ENCODE measurements at regions of chr1 and their contacts with region 1.

Region 1: DNA sequence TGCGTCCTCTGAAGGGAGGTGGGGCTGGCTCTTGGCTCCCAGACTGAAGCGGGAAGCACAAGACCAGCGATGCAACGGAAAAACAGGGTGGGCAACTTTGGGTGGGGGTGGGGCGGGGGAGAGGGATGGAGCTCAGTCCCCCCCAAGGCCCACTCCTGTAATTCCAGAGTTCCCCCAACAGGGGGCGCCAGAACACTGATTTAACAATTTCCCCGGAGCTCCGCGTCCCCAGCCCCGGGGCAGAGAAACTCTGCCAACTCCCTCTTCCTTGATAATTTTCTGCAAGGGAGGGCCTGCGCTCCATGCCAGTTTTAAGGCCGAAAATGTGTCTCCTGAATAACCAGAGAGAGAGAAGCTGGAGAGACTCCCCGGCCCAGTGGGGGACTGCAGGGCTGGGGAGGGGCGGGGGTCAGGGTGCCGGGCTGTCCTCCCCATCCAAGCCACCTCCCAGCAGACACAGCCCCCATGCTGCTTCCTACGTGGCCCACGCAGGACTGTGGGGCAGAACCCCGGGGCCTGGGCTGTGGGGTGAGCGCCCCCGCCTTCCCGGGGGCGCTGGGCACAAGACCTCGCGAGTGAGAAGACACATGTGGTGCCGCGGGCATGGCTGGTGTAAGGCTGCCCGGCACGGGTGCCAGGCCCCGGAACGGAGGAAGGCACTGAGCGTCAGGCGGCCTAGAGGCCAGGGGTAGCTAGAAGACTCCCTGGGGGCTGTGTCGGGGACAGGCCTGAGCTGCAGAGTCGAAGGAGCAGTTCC is 51.4 kb downstream of the KIF21B start:
- DNase-seq: no peak
- ATAC-seq: no peak
- H3K4me3 ChIP-seq: no peak overlapping the region
- H3K27ac ChIP-seq: no peak overlapping the region
- H3K4me1 ChIP-seq: peaks cover 23% of the 10 kb centered on the region
- H3K27me3 ChIP-seq: no peaks in the 10 kb centered on the region
- CTCF ChIP-seq: peak; percentile 62 to 82 (median 75)
- EP300 ChIP-seq: no peak
- POLR2A ChIP-seq: no peak
- RAD21 ChIP-seq: peak; percentile 88

Region 2: GRCh38 chr1:200628223-200628881 is 343.8 kb before region 1 on chr1:
- CTCF ChIA-PET with region 1: interaction called, 54 read pairs
- POLR2A ChIA-PET with region 1: no interaction called
- RAD21 ChIA-PET with region 1: interaction called, 53 read pairs
- SMC1A ChIA-PET with region 1: interaction called, 27 read pairs
- in situ Hi-C with region 1: loop called (anchors 5 kb)
- intact Hi-C with region 1: loop called (anchors 5 kb)
- DNase-seq: peak; percentile 89
- ATAC-seq: peak; percentile 82
- H3K4me3 ChIP-seq: peak overlapping the region; percentile 61
- H3K27ac ChIP-seq: peak overlapping the region; percentile 96
- H3K4me1 ChIP-seq: peaks cover 37% of the 10 kb centered on the region
- H3K27me3 ChIP-seq: no peaks in the 10 kb centered on the region
- CTCF ChIP-seq: no peak
- EP300 ChIP-seq: peak; percentile 54 to 55; a peak in 2 of 4 replicates
- POLR2A ChIP-seq: no peak
- RAD21 ChIP-seq: no peak

Region 3: DNA sequence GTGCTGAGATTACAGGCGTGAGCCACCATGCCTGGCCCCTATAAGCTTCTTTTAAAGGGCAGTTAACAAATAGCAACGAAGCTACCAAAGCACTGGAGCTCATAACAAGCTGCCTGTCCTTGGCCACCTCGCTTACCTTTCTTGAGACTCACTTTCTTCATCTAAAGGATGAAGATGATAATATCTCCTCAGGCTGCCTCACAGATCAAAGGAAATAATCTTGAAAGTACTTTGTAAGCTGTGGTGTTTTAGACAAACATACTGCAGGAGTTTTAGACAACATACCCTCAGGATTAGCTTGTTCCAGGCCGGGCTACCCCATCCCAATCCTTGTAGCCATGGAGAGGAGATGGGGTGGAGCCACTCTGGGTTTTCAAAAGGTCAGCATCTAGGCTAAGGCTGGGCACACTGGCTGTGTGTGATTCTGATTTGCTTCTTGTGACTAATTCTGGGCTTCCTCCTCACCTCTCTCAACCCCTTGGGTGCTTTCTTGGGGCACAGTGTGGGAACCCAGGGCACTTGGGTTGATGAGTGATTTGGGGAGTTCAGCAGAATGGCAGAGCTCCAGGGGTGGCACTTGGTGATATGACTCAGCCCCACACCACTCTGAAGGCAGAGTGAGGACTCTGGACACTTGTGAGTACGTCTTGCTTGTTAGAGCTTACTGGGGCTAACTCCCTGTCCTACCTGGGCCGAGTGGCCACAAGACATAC is 94.1 kb before region 1 on chr1:
- CTCF ChIA-PET with region 1: interaction called, 11 read pairs
- POLR2A ChIA-PET with region 1: interaction called, 5 read pairs
- RAD21 ChIA-PET with region 1: interaction called, 25 read pairs
- SMC1A ChIA-PET with region 1: interaction called, 31 read pairs
- in situ Hi-C with region 1: no loop called
- intact Hi-C with region 1: no loop called
- DNase-seq: peak; percentile 89
- ATAC-seq: peak; percentile 84
- H3K4me3 ChIP-seq: no peak overlapping the region
- H3K27ac ChIP-seq: no peak overlapping the region
- H3K4me1 ChIP-seq: peaks cover 17% of the 10 kb centered on the region
- H3K27me3 ChIP-seq: no peaks in the 10 kb centered on the region
- CTCF ChIP-seq: no peak
- EP300 ChIP-seq: peak in 1 of 2 experiments; percentile 58; a peak in 1 of 4 replicates
- POLR2A ChIP-seq: no peak
- RAD21 ChIP-seq: no peak

Region 4: DNA sequence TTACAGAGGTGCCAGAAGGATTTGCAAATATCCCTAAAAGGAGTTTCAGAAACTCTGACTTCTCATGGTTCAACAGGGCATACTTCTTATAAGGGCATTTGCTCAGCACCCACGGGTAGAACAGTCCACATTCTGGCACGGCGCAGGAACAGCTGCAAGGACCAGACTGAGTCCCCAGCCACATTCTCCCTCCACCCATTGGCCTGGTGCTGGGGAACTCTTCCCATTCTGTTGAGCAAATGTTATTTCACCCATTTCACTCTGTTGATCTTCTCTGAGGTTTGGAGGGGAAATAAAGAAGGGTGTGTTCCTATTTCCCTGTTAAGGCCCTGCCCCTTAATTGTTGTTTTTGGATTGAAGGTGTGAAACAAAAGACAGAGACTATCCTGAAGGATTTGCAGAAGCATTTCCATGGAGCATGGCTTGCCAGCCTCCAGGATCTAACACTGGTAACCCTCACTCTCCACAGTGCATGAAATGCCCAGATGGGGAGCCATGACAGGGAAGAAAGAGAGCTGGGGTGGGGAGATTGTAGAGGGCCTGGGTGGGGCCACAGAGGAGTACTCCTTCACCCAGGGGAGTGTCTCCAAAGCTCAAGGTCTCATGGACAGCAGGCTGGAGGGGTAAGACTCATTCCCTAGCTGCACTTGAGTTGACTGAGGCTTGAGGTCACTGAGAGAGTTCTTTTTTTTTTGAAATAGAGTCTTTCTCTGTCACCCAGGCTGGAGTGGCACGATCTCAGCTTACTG is 42.4 kb before region 1 on chr1:
- CTCF ChIA-PET with region 1: no interaction called
- POLR2A ChIA-PET with region 1: interaction called, 3 read pairs
- RAD21 ChIA-PET with region 1: interaction called, 4 read pairs
- SMC1A ChIA-PET with region 1: interaction called, 5 read pairs
- in situ Hi-C with region 1: loop called (anchors 5 kb)
- intact Hi-C with region 1: no loop called
- DNase-seq: no peak
- ATAC-seq: no peak
- H3K4me3 ChIP-seq: no peak overlapping the region
- H3K27ac ChIP-seq: no peak overlapping the region
- H3K4me1 ChIP-seq: no peaks in the 10 kb centered on the region
- H3K27me3 ChIP-seq: no peaks in the 10 kb centered on the region
- CTCF ChIP-seq: no peak
- EP300 ChIP-seq: no peak
- POLR2A ChIP-seq: no peak
- RAD21 ChIP-seq: no peak

Region 5: DNA sequence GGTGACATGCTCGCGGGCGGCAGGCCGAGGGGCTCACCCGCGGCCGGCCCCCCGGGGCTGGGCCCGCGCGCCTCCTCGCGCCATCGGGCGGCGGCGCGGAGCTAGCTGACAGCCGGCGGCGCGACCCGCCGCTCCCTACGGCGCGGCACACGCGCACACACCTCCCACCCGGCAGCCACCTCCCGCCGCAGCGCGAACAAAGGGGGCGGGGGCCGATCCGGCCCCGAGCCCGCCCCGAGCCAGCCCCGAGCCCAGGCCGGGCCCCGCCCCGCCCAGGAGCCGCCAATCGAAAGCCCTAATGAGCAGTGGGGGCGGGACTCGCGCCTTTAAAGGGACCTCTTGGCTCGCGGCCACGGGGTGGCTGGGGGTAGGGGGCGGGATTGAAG is 51.4 kb after region 1 on chr1 and contains the start of gene KIF21B:
- CTCF ChIA-PET with region 1: interaction called, 138 read pairs
- POLR2A ChIA-PET with region 1: interaction called, 27 read pairs
- RAD21 ChIA-PET with region 1: interaction called, 239 read pairs
- SMC1A ChIA-PET with region 1: interaction called, 37 read pairs
- in situ Hi-C with region 1: no loop called
- intact Hi-C with region 1: no loop called
- DNase-seq: no peak
- ATAC-seq: peak; percentile 68
- H3K4me3 ChIP-seq: peak within 1 kb of the TSS; percentile 93
- H3K27ac ChIP-seq: peak within 1 kb of the TSS; percentile 94
- H3K4me1 ChIP-seq: peaks cover 81% of the 10 kb centered on the region
- H3K27me3 ChIP-seq: no peaks in the 10 kb centered on the region
- CTCF ChIP-seq: no peak
- EP300 ChIP-seq: no peak
- POLR2A ChIP-seq: peak; percentile 74
- RAD21 ChIP-seq: no peak
- polyA plus RNA-seq, gene KIF21B: 2.3 to 2.9 TPM

Region 6: GRCh38 chr1:201114236-201115131 is 142.4 kb after region 1 on chr1:
- CTCF ChIA-PET with region 1: interaction called, 47 read pairs
- POLR2A ChIA-PET with region 1: no interaction called
- RAD21 ChIA-PET with region 1: interaction called, 21 read pairs
- SMC1A ChIA-PET with region 1: interaction called, 13 read pairs
- in situ Hi-C with region 1: loop called (anchors 5 kb)
- intact Hi-C with region 1: loop called (anchors 1 kb)
- DNase-seq: peak; percentile 17
- ATAC-seq: peak; percentile 97
- H3K4me3 ChIP-seq: peak overlapping the region; percentile 47
- H3K27ac ChIP-seq: no peak overlapping the region
- H3K4me1 ChIP-seq: no peaks in the 10 kb centered on the region
- H3K27me3 ChIP-seq: peaks cover 3 to 8% of the 10 kb centered on the region in 2 experiments; a peak in 3 of 4 replicates
- CTCF ChIP-seq: peak; percentile 79 to 89 (median 85)
- EP300 ChIP-seq: no peak
- POLR2A ChIP-seq: no peak
- RAD21 ChIP-seq: peak; percentile 84

Measured in GM12878 (cell line).